ENCODE measurements at regions of chr3 and their contacts with region 1.

Region 1: GRCh38 chr3:136350132-136350531 is 100.0 kb downstream of the PCCB start:
- DNase-seq: peak; percentile 92
- H3K4me3 ChIP-seq: peak overlapping the region; percentile 42
- H3K27ac ChIP-seq: peak overlapping the region; percentile 100
- H3K27me3 ChIP-seq: no peaks in the 10 kb centered on the region
- CTCF ChIP-seq: no peak

Region 2: DNA sequence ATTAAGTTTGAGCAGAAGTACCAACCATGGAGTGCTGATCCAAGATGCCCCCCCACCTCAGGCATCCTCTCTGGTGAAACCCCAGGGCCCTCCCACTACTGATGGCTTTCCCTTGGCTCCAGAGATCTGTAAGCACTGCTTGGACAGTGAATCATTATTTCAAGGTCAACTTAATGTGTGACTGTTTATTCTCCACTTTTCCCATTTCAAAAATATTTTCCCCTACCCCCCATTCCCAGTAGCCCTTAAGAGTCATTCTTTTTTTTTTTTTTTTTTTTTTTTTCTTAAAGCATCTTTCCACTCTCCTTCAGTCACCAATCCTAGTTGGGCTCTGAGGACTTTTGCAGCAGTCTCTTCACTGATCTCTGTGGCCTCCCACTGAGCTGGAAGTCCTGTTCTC is 17.4 kb before region 1 on chr3:
- CTCF ChIA-PET with region 1: interaction called, 15 read pairs
- POLR2A ChIA-PET with region 1: interaction called, 7 read pairs
- DNase-seq: peak; percentile 54
- H3K4me3 ChIP-seq: no peak overlapping the region
- H3K27ac ChIP-seq: no peak overlapping the region
- H3K27me3 ChIP-seq: no peaks in the 10 kb centered on the region
- CTCF ChIP-seq: no peak

Region 3: GRCh38 chr3:136366289-136366688 is 16.2 kb after region 1 on chr3:
- CTCF ChIA-PET with region 1: interaction called, 16 read pairs
- POLR2A ChIA-PET with region 1: no interaction called
- DNase-seq: peak; percentile 10
- H3K4me3 ChIP-seq: no peak overlapping the region
- H3K27ac ChIP-seq: no peak overlapping the region
- H3K27me3 ChIP-seq: no peaks in the 10 kb centered on the region
- CTCF ChIP-seq: no peak

Region 4: DNA sequence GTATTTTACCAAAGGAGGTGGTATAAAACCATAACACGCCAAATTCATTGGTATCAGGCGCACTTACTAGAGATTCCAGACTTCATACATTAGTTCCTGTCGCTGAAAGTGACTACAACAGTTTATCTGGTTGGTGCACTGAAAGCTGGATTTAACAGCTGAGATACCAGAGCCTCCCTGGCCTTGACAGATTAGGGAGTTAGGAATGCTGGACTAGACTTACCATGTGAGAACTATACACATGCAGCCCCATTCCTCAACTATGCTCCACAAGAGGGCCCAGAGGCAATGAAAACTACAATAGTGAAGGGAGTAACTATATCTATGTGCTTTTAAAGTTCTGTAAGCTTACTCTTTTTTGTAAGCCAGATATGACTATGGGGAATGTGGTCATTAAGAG is 227.7 kb after region 1 on chr3:
- CTCF ChIA-PET with region 1: no interaction called
- POLR2A ChIA-PET with region 1: no interaction called
- DNase-seq: no peak
- H3K4me3 ChIP-seq: no peak overlapping the region
- H3K27ac ChIP-seq: no peak overlapping the region
- H3K27me3 ChIP-seq: no peaks in the 10 kb centered on the region
- CTCF ChIP-seq: no peak

Measured in AG04450 (cell line).